PC-3 (cell line): ENCODE measurements at regions of chr12 and their contacts with region 1.

Region 1: DNA sequence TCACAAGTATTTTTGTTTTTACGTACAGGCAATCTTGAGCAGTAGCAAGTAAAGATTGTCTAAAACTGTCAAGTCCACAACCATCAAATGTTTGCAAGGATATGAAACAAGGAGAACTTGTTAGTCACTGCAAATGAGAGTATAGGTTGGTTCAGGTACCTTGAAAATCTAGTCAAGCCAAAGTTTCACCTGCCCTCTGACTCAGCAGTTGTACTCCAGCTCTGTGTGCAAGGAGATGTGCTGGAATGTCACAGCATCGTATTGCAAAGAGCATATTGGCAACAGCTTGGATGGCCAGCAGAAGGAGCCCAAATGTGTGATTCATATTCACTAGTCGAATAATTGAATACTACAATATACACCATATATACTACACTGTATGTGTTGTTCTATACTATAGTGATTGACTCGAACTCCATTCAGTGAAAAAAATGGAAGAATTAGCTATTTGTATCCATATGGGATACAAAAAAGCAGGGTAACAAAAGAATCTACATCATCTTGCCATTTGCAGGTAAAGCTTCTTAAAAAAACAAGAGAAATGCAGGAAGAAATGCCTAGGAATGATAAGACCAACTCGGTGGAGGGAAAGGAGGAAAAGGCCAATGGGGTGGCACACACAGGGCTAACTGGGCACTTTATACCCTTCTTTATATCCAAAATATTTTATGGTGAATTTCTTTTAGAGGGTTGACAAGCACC is 44.0 kb downstream of the EID3 start:
- DNase-seq: peak; percentile 86
- ATAC-seq: peak; percentile 63
- H3K4me3 ChIP-seq: no peak overlapping the region
- H3K27ac ChIP-seq: no peak overlapping the region
- H3K4me1 ChIP-seq: peaks cover 19% of the 10 kb centered on the region; the same call in 1 of the 2 replicates
- H3K27me3 ChIP-seq: no peaks in the 10 kb centered on the region
- CTCF ChIP-seq: peak; percentile 39

Region 2: GRCh38 chr12:104220931-104221330 is 126.6 kb before region 1 on chr12:
- CTCF ChIA-PET with region 1: no interaction called
- POLR2A ChIA-PET with region 1: interaction called, 10 read pairs
- intact Hi-C with region 1: no loop called
- DNase-seq: no peak
- ATAC-seq: no peak
- H3K4me3 ChIP-seq: no peak overlapping the region
- H3K27ac ChIP-seq: peak overlapping the region; percentile 96
- H3K4me1 ChIP-seq: peaks cover 45% of the 10 kb centered on the region
- H3K27me3 ChIP-seq: no peaks in the 10 kb centered on the region
- CTCF ChIP-seq: no peak